ENCODE measurements at regions of chr3 and their contacts with region 1.

Region 1: DNA sequence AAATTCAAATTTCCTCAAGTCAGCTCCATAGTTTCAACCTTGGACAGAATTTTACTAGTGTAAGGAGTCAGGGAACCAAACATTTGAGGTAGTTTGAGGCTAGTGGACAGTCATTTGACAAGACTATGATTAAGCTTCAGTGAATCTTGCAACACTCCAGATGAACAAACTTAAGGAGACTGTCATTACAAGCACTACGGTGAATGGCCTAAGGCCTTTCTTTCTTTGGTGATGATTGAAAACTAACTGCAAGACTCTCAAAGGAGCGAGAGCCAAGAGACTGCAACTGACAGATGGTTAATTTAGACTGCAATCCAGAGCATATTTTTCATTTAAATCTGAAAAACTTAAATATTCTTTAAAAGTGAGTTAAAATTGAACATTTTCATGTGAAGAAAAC is 272.3 kb upstream of the NECTIN3 start:
- DNase-seq: no peak
- H3K4me3 ChIP-seq: no peak overlapping the region
- H3K27ac ChIP-seq: no peak overlapping the region
- H3K4me1 ChIP-seq: no peaks in the 10 kb centered on the region
- H3K27me3 ChIP-seq: no peaks in the 10 kb centered on the region
- CTCF ChIP-seq: no peak
- POLR2A ChIP-seq: no peak

Region 2: DNA sequence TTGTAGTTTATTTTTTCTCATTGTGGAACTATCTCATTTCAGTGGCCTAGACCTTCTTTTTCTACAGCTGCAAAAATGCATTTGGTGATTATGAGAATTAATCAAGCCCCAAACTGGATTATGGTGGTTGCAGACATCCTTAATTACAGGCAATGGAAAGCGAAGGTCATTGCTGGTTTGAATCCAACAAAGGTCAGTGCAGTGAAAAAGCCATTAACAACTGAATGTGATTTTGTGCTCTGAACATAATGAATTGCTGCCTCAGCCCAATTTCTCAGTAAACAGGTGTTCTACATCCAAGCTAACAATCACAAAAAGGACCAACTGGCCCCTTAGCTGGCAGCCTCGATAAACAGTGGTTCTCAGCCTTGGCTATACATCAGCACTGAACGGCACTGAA is 1201.8 kb before region 1 on chr3:
- intact Hi-C with region 1: loop called (anchors 5 kb)
- DNase-seq: no peak
- H3K4me3 ChIP-seq: no peak overlapping the region
- H3K27ac ChIP-seq: no peak overlapping the region
- H3K4me1 ChIP-seq: no peaks in the 10 kb centered on the region
- H3K27me3 ChIP-seq: no peaks in the 10 kb centered on the region
- CTCF ChIP-seq: no peak
- POLR2A ChIP-seq: no peak

Region 3: GRCh38 chr3:109731620-109732473 is 1067.4 kb before region 1 on chr3:
- intact Hi-C with region 1: no loop called
- DNase-seq: no peak
- H3K4me3 ChIP-seq: no peak overlapping the region
- H3K27ac ChIP-seq: no peak overlapping the region
- H3K4me1 ChIP-seq: no peaks in the 10 kb centered on the region
- H3K27me3 ChIP-seq: no peaks in the 10 kb centered on the region
- CTCF ChIP-seq: peak; percentile 61 to 70 (median 66)
- POLR2A ChIP-seq: no peak

Region 4: DNA sequence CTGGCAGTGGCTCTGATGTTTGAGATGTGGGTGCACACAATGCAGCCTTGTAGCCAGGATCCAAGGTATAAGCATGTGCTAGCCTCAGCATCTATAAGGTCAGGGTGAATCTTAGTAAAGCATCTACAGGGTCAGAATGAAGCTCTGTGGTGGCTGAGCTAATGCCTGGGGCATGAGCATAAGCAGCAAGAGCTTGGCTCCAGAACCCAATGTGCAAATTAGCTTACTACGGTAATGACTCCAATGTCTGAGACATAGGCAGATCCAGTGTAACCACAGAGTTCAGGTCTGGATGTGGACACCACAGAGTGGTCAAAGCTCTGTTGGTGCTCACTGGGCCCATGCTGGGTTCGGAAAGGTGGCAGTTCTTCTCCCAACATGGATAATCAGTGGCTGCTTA is 32.1 kb before region 1 on chr3:
- intact Hi-C with region 1: no loop called
- DNase-seq: no peak
- H3K4me3 ChIP-seq: no peak overlapping the region
- H3K27ac ChIP-seq: no peak overlapping the region
- H3K4me1 ChIP-seq: no peaks in the 10 kb centered on the region
- H3K27me3 ChIP-seq: no peaks in the 10 kb centered on the region
- CTCF ChIP-seq: no peak
- POLR2A ChIP-seq: no peak

Region 5: DNA sequence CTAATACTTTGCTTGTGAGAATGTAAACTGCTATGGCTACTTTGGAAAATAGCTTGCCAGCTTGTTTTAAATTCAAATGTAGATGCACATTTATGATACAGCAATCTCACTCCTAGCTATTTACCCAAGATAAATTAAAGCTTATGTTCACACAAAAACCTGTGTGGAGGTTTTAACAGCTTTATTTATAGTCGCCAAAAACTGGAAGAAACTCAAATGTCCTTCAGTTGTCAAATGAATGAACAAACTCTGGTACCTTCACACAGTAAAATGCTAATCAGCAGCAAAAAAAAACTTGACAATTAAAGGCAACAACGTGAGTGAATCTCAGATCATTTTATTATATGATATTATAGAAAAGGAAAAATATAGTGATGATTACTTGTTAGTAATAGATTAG is 23.7 kb after region 1 on chr3:
- intact Hi-C with region 1: no loop called
- DNase-seq: no peak
- H3K4me3 ChIP-seq: no peak overlapping the region
- H3K27ac ChIP-seq: no peak overlapping the region
- H3K4me1 ChIP-seq: no peaks in the 10 kb centered on the region
- H3K27me3 ChIP-seq: no peaks in the 10 kb centered on the region
- CTCF ChIP-seq: no peak
- POLR2A ChIP-seq: no peak

Region 6: DNA sequence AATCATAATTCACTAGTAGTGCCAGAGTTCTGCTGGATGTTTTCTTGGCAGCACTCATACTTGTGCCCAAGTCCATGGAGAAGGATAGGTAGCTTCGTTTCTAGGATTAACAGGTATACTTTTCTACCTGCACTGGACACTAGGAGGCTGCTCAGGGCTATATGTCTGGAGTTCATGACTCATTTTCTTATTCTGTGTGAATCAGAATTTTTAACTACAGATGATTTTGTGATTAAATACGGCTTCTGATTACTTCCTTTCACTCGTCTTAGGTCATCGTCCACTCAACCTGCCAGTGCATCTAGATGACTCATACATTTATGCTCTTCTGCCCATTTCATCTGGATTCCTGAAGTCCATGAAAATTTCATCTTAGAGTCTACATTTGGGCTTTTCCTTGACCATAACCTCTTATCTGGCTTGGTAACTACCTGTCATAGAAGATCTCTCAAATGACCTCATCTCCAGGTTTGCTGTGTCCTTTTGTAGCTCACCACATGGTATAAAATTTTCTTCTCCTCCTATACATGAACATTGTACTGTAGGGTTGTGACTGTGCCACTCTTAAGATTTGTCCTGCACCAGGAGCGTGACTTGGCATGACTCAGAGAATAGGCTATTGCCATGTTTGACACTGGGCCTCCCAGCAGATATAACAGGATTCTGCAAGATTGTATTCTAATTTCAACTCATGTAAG is 1400.5 kb after region 1 on chr3:
- intact Hi-C with region 1: no loop called
- DNase-seq: no peak
- H3K4me3 ChIP-seq: no peak overlapping the region
- H3K27ac ChIP-seq: no peak overlapping the region
- H3K4me1 ChIP-seq: no peaks in the 10 kb centered on the region
- H3K27me3 ChIP-seq: no peaks in the 10 kb centered on the region
- CTCF ChIP-seq: no peak
- POLR2A ChIP-seq: no peak

Measured in breast epithelium (tissue), 4 donors.